Sigmoid colon (tissue), 7 donors: ENCODE measurements at regions of chr10 and their contacts with region 1.

Region 1: GRCh38 chr10:51422311-51423120 is 276.9 kb downstream of the CSTF2T start:
- DNase-seq: peak; percentile 74
- H3K4me3 ChIP-seq: no peak overlapping the region
- H3K27ac ChIP-seq: peak overlapping the region; percentile 33 to 65 (median 62)
- H3K4me1 ChIP-seq: peaks cover 0 to 24% (median 13%) of the 10 kb centered on the region in 4 donors
- H3K27me3 ChIP-seq: no peaks in the 10 kb centered on the region
- CTCF ChIP-seq: peak; percentile 38 to 73 (median 64)
- EP300 ChIP-seq: no peak
- POLR2A ChIP-seq: no peak

Region 2: GRCh38 chr10:51010977-51011376 is 411.5 kb before region 1 on chr10:
- intact Hi-C with region 1: loop called (anchors 5 kb)
- DNase-seq: no peak
- H3K4me3 ChIP-seq: no peak overlapping the region
- H3K27ac ChIP-seq: no peak overlapping the region
- H3K4me1 ChIP-seq: peaks cover 0 to 10% (median 6%) of the 10 kb centered on the region in 4 donors
- H3K27me3 ChIP-seq: no peaks in the 10 kb centered on the region
- CTCF ChIP-seq: peak; percentile 46 to 85 (median 79)
- EP300 ChIP-seq: no peak
- POLR2A ChIP-seq: no peak

Region 3: GRCh38 chr10:51063659-51064535 is 358.6 kb before region 1 on chr10:
- intact Hi-C with region 1: loop called (anchors 2 kb)
- DNase-seq: no peak
- H3K4me3 ChIP-seq: no peak overlapping the region
- H3K27ac ChIP-seq: no peak overlapping the region
- H3K4me1 ChIP-seq: peaks cover 0 to 13% (median 0%) of the 10 kb centered on the region in 4 donors
- H3K27me3 ChIP-seq: no peaks in the 10 kb centered on the region
- CTCF ChIP-seq: peak; percentile 33 to 63 (median 40)
- EP300 ChIP-seq: no peak
- POLR2A ChIP-seq: no peak

Region 4: GRCh38 chr10:51074238-51075028 is 348.1 kb before region 1 on chr10 and contains the start of gene PRKG1:
- intact Hi-C with region 1: loop called (anchors 2 kb)
- DNase-seq: peak; percentile 92
- H3K4me3 ChIP-seq: peak within 1 kb of the TSS; percentile 62 to 79 (median 68)
- H3K27ac ChIP-seq: peak within 1 kb of the TSS; percentile 88 to 93 (median 92)
- H3K4me1 ChIP-seq: peaks cover 0 to 31% (median 20%) of the 10 kb centered on the region in 4 donors
- H3K27me3 ChIP-seq: no peaks in the 10 kb centered on the region
- CTCF ChIP-seq: no peak
- EP300 ChIP-seq: no peak
- POLR2A ChIP-seq: peak; percentile 17 to 21
- total RNA-seq, gene PRKG1: 60.2 to 92.9 (median 79.1) TPM

Region 5: DNA sequence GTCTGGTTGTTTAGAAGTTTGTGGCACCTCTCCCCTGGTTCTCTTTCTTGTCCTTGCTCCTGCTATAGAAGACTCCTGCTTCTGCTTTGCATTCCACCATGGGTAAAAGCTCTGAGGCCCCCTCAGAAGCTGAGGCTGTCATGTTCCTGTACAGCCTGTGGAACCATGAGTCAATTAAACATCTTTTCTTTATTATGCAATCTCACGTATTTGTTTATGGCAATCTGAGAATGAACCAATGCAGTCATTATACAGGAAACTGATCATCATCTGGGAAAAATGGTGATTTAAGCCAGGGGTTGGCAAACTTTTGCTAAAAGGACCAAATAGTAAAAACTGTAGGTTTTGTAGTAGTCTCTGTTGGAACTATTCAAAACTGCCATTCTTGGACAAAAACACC is 101.5 kb after region 1 on chr10:
- intact Hi-C with region 1: no loop called
- DNase-seq: no peak
- H3K4me3 ChIP-seq: no peak overlapping the region
- H3K27ac ChIP-seq: no peak overlapping the region
- H3K4me1 ChIP-seq: peaks cover 0 to 18% (median 0%) of the 10 kb centered on the region in 4 donors
- H3K27me3 ChIP-seq: no peaks in the 10 kb centered on the region
- CTCF ChIP-seq: no peak
- EP300 ChIP-seq: no peak
- POLR2A ChIP-seq: no peak

Region 6: GRCh38 chr10:51950371-51950995 is 528.0 kb after region 1 on chr10:
- intact Hi-C with region 1: loop called (anchors 10 kb)
- DNase-seq: no peak
- H3K4me3 ChIP-seq: no peak overlapping the region
- H3K27ac ChIP-seq: peak overlapping the region in 3 of 4 donors; percentile 23 to 50 (median 32)
- H3K4me1 ChIP-seq: peaks cover 0 to 37% (median 24%) of the 10 kb centered on the region in 4 donors
- H3K27me3 ChIP-seq: no peaks in the 10 kb centered on the region
- CTCF ChIP-seq: no peak
- EP300 ChIP-seq: no peak
- POLR2A ChIP-seq: no peak

Region 7: DNA sequence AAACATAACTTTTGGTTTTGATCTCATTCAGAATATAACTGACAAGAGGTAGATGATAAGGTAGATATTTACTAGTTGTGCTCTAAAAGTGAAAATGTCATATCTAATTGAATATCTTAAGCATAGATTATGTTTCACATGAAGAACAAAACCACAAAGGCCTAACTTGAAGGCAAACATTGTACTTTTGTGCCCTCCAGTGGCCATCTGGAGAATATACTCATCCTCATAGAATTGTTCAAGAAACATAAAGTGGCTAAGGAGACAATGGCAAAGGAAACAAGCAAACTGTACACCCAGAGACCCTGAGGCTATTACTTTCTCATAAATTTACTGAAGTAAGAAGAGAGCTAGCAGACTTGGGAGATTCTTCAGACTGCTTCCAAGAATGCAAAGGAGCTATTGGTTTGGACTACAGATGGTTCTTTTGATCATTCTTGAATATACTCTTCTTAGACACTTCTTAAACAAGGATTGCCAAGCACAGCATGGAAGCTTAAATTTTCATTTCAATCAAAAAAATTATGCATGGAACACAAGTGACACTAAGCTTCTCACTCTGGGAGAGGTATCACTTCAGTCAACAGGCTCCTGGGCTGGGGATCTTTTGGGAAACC is 793.3 kb after region 1 on chr10:
- intact Hi-C with region 1: loop called (anchors 5 kb)
- DNase-seq: no peak
- H3K4me3 ChIP-seq: no peak overlapping the region
- H3K27ac ChIP-seq: no peak overlapping the region
- H3K4me1 ChIP-seq: peaks cover 0 to 7% (median 3%) of the 10 kb centered on the region in 4 donors
- H3K27me3 ChIP-seq: no peaks in the 10 kb centered on the region
- CTCF ChIP-seq: peak; percentile 41 to 82 (median 68)
- EP300 ChIP-seq: no peak
- POLR2A ChIP-seq: no peak